ENCODE measurements at regions of chr9 and their contacts with region 1.

Region 1: DNA sequence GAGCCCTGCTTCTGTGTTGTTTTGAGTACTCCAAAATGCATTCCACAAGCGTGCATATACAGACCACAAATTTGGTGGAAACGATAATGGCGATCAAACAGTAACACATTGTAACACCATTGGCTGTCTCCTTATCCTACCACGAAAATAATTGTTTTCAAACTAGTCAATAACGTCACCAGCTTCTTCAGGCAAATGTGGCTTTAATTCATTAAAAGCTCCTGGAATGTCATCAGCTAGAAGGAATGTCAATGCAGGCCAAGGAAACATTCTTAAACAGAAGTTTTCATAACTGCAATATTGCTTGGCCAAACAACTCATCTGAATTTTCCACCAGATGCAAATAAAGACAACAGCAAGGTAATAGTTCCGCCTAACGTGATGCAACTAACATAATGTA is 71.6 kb upstream of the XPA start:
- DNase-seq: no peak
- H3K4me3 Mint-ChIP-seq: no peak overlapping the region
- H3K27ac Mint-ChIP-seq: no peak overlapping the region
- H3K4me1 Mint-ChIP-seq: no peaks in the 10 kb centered on the region
- H3K27me3 Mint-ChIP-seq: peaks cover 3% of the 10 kb centered on the region

Region 2: DNA sequence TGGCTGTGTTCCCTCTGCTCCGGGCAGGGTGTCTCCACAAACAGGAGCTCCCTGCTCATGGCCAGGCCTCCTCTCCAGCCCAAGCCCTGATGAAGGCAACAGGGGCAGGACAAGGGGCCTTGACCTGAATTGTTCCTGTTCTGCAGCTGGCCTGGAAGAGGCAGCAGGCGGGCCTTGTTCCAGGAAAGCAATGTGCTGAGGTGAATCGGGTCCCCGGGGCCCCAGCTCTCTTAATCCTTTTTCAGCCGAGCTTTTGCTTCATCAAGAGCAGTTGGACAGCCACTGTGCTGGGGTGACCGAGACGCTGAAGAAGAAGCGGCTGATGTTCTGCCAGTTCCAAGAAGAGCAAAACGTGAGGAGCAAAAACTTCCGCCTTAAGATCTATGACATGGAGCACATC is 419.9 kb before region 1 on chr9:
- CTCF ChIA-PET with region 1: no interaction called
- intact Hi-C with region 1: no loop called
- DNase-seq: no peak
- H3K4me3 Mint-ChIP-seq: no peak overlapping the region
- H3K27ac Mint-ChIP-seq: no peak overlapping the region
- H3K4me1 Mint-ChIP-seq: no peaks in the 10 kb centered on the region
- H3K27me3 Mint-ChIP-seq: no peaks in the 10 kb centered on the region

Region 3: GRCh38 chr9:97820373-97820772 is 51.6 kb after region 1 on chr9:
- CTCF ChIA-PET with region 1: no interaction called
- intact Hi-C with region 1: loop called (anchors 10 kb)
- DNase-seq: no peak
- H3K4me3 Mint-ChIP-seq: no peak overlapping the region
- H3K27ac Mint-ChIP-seq: no peak overlapping the region
- H3K4me1 Mint-ChIP-seq: no peaks in the 10 kb centered on the region
- H3K27me3 Mint-ChIP-seq: peaks cover 22% of the 10 kb centered on the region